ENCODE measurements at regions of chr1 and their contacts with region 1.

Region 1: DNA sequence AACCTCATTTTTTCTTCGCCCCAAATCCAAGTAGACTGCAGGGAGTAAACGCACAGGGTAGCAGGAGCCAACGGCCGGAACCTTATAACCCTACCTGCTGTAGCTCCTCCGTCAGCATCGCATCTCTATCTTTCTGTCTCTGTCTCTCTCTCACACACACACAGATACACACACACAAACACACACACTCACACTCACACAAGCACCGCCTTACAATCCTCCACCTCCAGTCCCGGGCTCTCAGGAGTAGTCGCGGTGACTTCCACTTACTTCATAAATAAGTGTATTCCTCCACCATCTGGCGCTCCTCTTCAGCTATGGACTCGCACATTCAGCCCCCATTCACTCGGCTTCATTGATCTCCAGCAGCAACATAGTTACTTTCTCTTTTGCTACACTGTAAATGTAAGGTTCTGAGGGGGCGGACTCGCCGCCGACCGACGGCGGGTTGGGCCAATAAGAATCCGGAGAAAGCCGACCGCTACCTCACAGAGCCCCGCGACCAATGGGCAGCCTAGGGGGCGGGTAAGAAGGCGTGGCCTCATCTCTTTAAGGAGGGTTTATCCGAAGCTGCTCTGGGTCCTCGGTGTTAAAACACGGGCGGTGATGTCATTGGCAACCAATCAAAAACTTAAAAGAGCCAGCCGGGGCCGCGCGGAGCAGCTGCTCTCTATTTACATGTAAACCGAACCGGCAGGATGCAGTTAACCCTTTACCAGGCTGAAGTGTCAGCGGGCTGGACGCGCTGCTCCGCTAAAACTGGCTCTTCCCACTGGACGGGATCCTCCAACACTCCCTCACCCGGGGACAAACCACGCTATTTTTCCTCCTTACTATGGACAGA is at the start of gene DUSP10:
- DNase-seq: peak; percentile 97 to 98
- H3K4me3 ChIP-seq: peak within 1 kb of the TSS; percentile 68
- H3K4me3 Mint-ChIP-seq: no peak within 1 kb of the TSS
- H3K27ac Mint-ChIP-seq: no peak within 1 kb of the TSS
- H3K4me1 ChIP-seq: 0 out of 2 replicates have a peak, but pooled peaks cover 7% of the 10 kb centered on the region
- H3K4me1 Mint-ChIP-seq: no peaks in the 10 kb centered on the region
- H3K27me3 ChIP-seq: no peaks in the 10 kb centered on the region
- H3K27me3 Mint-ChIP-seq: no peaks in the 10 kb centered on the region
- CTCF ChIP-seq: no peak
- total RNA-seq, gene DUSP10: 2.0 and 2.1 TPM in 2 replicates

Region 2: DNA sequence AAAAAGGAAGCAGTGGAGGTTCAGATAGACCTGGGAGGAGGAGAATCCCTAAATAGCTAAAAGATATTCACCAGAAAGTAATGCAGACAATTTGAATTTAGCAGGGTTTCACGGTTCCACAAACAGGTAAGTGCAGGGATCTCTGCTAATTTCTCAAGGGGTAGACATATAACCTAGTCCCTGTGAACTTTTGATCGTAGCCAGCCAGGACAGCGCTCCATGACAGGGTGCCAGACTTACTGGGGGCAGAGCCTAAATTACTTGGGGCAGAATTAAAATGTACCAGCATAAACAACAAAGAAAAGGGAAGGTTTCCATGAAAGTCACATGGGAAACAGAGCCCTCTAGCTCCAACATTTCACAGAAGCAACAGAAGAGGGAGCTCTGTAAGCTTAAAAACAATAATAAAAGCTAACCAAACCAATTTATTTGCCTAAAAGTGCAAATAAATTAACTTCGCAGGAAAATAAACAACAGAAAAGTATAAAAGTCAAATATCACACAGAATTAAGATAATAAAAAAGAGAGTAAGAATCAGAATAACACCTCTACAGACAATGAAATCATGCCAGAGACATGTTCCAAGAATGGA is 198.3 kb before region 1 on chr1:
- CTCF ChIA-PET with region 1: no interaction called
- POLR2A ChIA-PET with region 1: no interaction called
- intact Hi-C with region 1: loop called (anchors 5 kb)
- DNase-seq: no peak
- H3K4me3 ChIP-seq: no peak overlapping the region
- H3K4me3 Mint-ChIP-seq: no peak overlapping the region
- H3K27ac Mint-ChIP-seq: no peak overlapping the region
- H3K4me1 ChIP-seq: no peaks in the 10 kb centered on the region
- H3K4me1 Mint-ChIP-seq: no peaks in the 10 kb centered on the region
- H3K27me3 ChIP-seq: no peaks in the 10 kb centered on the region
- H3K27me3 Mint-ChIP-seq: peaks cover 17% of the 10 kb centered on the region
- CTCF ChIP-seq: peak in 1 of 2 experiments; percentile 5

Region 3: DNA sequence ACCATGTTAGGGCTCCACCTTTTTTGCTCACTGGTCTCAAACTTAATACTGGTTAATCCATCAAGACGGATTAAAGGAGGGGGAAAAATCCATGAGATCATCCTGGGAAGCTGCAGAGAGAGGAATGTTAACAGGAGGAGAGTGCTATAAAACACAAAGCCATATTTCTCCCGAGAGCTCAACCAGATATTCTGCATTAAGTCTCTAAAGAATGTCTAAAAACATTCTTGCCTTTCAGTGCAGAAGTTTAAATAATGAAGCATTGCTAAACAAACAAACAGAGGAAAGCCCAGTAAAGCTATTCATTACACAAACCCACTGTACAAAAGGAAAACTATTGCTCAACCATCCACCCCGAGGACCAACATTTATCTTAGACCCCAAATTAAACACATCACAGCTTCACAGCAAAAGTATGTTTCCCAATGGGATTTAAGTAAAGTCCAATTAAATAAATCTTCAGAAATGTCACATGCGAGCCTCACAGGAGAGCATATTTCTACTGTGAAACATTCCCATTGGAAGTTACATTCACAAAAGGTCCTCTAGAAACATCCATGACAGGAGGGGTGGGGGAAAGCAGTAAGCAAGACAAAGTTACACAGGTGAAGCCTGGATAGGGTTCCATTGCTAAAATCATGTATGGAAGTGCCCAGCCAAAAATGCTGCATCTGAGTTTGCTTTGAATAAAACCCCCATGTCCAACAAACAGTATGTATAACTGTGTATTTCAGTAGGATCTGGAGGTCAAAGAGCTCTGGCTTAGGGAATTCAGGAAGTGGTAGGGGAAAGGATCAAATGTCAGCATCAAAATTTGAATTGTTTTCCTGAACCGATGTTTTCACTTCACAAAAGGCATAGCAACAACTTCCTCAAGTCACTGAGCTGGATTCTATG is 23.3 kb before region 1 on chr1:
- CTCF ChIA-PET with region 1: no interaction called
- POLR2A ChIA-PET with region 1: interaction called, 6 read pairs
- intact Hi-C with region 1: loop called (anchors 1 kb)
- DNase-seq: peak in 1 of 2 experiments; percentile 16
- H3K4me3 ChIP-seq: no peak overlapping the region
- H3K4me3 Mint-ChIP-seq: peak overlapping the region; percentile 23
- H3K27ac Mint-ChIP-seq: no peak overlapping the region
- H3K4me1 ChIP-seq: peaks cover 12% of the 10 kb centered on the region
- H3K4me1 Mint-ChIP-seq: peaks cover 19% of the 10 kb centered on the region
- H3K27me3 ChIP-seq: no peaks in the 10 kb centered on the region
- H3K27me3 Mint-ChIP-seq: no peaks in the 10 kb centered on the region
- CTCF ChIP-seq: no peak

Region 4: GRCh38 chr1:221768443-221769063 is 26.6 kb after region 1 on chr1:
- CTCF ChIA-PET with region 1: no interaction called
- POLR2A ChIA-PET with region 1: no interaction called
- intact Hi-C with region 1: no loop called
- DNase-seq: no peak
- H3K4me3 ChIP-seq: no peak overlapping the region
- H3K4me3 Mint-ChIP-seq: no peak overlapping the region
- H3K27ac Mint-ChIP-seq: no peak overlapping the region
- H3K4me1 ChIP-seq: no peaks in the 10 kb centered on the region
- H3K4me1 Mint-ChIP-seq: no peaks in the 10 kb centered on the region
- H3K27me3 ChIP-seq: no peaks in the 10 kb centered on the region
- H3K27me3 Mint-ChIP-seq: peaks cover 17% of the 10 kb centered on the region
- CTCF ChIP-seq: no peak

Region 5: DNA sequence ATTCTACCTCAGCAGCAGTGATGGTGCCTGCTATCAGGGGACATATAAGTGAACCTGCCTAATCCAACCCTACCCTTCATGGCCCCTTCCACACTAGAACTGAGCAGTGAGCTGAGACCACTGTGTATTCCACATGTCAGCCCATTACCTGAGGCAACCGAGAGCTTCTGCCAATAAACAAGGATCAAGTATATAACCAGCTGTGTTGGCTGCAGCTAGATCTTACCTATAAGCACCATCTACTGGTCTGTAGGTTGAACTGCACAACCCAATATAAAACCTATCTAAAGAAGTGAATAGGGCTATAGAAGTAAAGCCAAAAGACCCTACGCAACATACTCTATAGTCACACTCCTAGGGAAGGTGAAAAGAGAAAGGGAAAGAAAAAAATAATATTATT is 429.1 kb after region 1 on chr1:
- CTCF ChIA-PET with region 1: no interaction called
- POLR2A ChIA-PET with region 1: no interaction called
- intact Hi-C with region 1: loop called (anchors 2 kb)
- DNase-seq: peak in 1 of 2 experiments; percentile 4
- H3K4me3 ChIP-seq: no peak overlapping the region
- H3K4me3 Mint-ChIP-seq: no peak overlapping the region
- H3K27ac Mint-ChIP-seq: no peak overlapping the region
- H3K4me1 ChIP-seq: no peaks in the 10 kb centered on the region
- H3K4me1 Mint-ChIP-seq: no peaks in the 10 kb centered on the region
- H3K27me3 ChIP-seq: no peaks in the 10 kb centered on the region
- H3K27me3 Mint-ChIP-seq: peaks cover 2% of the 10 kb centered on the region
- CTCF ChIP-seq: peak; percentile 34 to 52

Measured in Caco-2 (cell line).